Endothelial cell of umbilical vein (primary cell): ENCODE measurements at regions of chr22 and their contacts with region 1.

Region 1: DNA sequence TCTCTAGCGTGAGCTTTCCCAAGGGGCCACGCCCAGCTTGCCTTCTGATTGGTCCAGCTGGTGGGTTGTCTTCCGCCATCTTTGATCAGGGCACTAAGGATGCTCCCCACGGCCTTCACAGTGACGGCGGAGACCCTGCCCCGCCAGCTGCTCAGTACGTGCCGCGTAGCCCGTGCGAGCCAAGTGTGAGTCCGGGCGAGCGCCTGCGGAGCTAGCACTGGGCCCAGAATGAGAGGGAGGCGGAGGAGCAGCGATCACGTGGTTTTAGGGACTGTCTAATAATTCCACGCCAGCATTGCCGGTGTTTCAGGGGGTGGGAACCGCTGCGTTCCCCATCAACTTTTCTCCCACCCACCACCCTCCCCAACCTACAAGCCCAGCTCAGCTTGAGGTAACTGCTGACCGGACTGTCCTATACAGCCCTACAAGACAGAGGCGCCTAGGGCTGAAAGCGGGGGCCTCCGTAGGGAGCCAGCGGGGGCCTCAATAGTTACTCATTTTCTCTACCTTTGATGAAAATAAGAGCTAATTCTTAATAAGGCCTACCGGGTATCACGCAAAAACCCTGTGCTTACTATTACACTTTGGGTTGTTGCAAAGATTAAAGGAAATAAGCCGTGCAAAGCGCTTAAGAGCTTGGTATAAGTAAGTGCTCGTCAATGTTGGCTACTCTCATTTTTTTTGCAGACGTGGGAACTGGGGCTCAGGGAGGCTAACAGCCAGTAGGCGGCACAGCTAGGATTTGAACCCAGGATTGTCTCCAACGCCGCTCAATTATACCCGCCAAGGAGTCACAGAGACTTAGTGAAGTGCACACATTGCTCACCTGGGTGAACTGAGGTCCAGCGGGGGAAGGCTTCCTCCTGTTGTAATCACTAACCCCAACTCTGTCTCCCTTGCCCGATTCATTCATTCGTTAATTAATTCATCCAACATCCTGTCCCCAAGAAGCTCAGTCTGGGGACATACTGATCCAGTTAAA is 1.3 kb upstream of the MTFP1 start:
- DNase-seq: peak; percentile 100
- H3K4me3 ChIP-seq: peak overlapping the region; percentile 2 to 28 (median 19)
- H3K27ac ChIP-seq: peak overlapping the region; percentile 98
- H3K4me1 ChIP-seq: peaks cover 59% of the 10 kb centered on the region
- H3K27me3 ChIP-seq: no peaks in the 10 kb centered on the region
- CTCF ChIP-seq: peak in 1 of 2 donors; percentile 5
- POLR2A ChIP-seq: peak; percentile 72

Region 2: DNA sequence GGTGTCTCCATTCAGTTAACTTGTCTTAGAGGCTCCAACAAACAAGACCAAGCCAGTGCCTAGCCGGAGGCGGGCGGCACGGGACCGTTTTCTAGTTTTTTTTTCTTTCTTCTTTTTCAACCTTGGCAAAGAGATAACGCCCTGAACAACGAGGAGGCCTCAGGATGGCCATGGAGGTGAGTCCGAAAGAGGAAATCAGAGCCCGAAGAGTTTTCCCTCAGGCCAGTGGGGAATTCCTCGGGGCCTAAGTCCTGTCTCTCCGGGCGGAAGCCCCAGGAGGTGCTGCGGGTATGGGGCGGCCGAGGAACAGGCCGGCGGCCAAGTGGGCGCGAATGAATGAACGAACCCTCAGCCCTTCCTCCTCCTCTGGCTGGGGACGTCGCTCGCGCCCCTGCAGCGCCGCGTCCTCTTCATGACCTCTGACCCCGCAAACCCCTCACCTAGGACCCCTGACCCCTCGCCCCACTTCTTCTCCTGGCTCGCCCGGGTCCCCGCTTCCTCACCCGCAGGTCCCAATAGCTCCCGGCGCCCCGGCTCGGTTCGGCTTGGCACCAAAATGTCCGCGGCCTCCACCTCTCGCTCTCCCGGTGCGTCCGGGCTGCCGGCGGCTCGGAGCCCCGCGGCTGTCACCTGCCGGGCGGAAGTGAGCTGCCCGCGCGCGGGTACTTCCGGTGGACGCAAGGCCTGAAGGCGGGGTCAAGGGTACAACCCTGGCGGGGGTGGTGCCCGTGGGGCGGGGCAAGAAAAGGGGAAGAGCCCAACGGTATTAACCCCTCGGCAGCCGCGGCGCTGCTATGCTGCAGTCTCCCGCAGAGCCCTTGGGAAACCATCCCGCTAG is 1036.1 kb before region 1 on chr22 and contains the start of gene AP1B1:
- CTCF ChIA-PET with region 1: no interaction called
- POLR2A ChIA-PET with region 1: no interaction called
- dilution Hi-C with region 1: no loop called
- intact Hi-C with region 1: loop called (anchors 10 kb)
- DNase-seq: peak; percentile 86
- H3K4me3 ChIP-seq: peak within 1 kb of the TSS; percentile 73 to 97 (median 83)
- H3K27ac ChIP-seq: peak within 1 kb of the TSS; percentile 22
- H3K4me1 ChIP-seq: peaks cover 20% of the 10 kb centered on the region
- H3K27me3 ChIP-seq: no peaks in the 10 kb centered on the region
- CTCF ChIP-seq: no peak
- POLR2A ChIP-seq: peak; percentile 44
- total RNA-seq, gene AP1B1: 102 and 107 TPM in 2 replicates

Region 3: DNA sequence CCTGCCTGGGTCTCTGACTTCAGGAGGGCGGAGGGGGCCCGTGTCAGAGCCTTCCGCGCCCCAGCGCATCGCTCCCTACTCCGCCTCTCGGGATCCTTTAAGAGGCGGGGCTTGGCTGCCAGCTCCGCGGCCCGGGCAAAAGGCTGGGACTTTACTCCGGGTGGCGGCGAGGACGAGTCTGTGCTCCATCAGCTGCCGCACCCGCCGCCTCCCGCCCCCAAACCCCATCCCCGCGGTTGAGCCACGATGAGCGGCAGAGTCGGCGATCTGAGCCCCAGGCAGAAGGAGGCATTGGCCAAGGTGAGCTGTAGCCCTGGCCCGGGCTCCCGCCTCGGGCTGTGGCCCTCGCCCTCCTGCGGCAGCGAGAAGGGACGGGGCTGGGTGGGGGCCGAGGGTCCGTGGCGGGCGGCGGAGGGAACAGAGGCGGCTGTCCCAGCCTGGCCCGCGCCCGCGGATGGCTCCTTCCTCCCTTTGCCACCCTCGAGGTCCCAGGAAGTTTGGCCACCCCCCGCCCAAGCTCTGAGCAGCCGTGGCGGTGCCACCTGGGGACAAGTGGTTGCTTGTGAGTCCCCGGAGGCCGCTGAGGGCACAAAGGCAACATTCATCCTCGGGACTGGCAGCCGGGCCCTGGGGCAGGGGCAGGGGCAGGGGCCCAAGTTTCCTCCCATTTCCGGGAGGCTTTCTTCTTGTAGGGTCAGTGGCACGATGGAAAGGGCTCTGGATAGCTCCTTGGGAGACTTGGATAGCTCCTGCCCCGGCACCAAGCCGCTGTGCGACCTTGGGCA is 27.2 kb before region 1 on chr22 and contains the start of gene SEC14L2:
- CTCF ChIA-PET with region 1: interaction called, 58 read pairs
- POLR2A ChIA-PET with region 1: interaction called, 5 read pairs
- dilution Hi-C with region 1: no loop called
- intact Hi-C with region 1: loop called (anchors 1 kb)
- DNase-seq: peak; percentile 52
- H3K4me3 ChIP-seq: peak within 1 kb of the TSS; percentile 61 to 86 (median 79)
- H3K27ac ChIP-seq: no peak within 1 kb of the TSS
- H3K4me1 ChIP-seq: peaks cover 16% of the 10 kb centered on the region
- H3K27me3 ChIP-seq: no peaks in the 10 kb centered on the region
- CTCF ChIP-seq: no peak
- POLR2A ChIP-seq: peak; percentile 66
- total RNA-seq, gene SEC14L2: 22.7 and 28.8 TPM in 2 replicates

Region 4: GRCh38 chr22:30413745-30414524 is 10.3 kb before region 1 on chr22:
- CTCF ChIA-PET with region 1: interaction called, 21 read pairs
- POLR2A ChIA-PET with region 1: no interaction called
- dilution Hi-C with region 1: no loop called
- intact Hi-C with region 1: no loop called
- DNase-seq: no peak
- H3K4me3 ChIP-seq: no peak overlapping the region
- H3K27ac ChIP-seq: no peak overlapping the region
- H3K4me1 ChIP-seq: peaks cover 1% of the 10 kb centered on the region
- H3K27me3 ChIP-seq: no peaks in the 10 kb centered on the region
- CTCF ChIP-seq: no peak
- POLR2A ChIP-seq: no peak

Region 5: GRCh38 chr22:30444632-30445437 is 20.6 kb after region 1 on chr22:
- CTCF ChIA-PET with region 1: interaction called, 22 read pairs
- POLR2A ChIA-PET with region 1: interaction called, 4 read pairs
- dilution Hi-C with region 1: no loop called
- intact Hi-C with region 1: no loop called
- DNase-seq: peak; percentile 76
- H3K4me3 ChIP-seq: no peak overlapping the region
- H3K27ac ChIP-seq: no peak overlapping the region
- H3K4me1 ChIP-seq: no peaks in the 10 kb centered on the region
- H3K27me3 ChIP-seq: no peaks in the 10 kb centered on the region
- CTCF ChIP-seq: peak; percentile 77 to 83
- POLR2A ChIP-seq: peak; percentile 21

Region 6: DNA sequence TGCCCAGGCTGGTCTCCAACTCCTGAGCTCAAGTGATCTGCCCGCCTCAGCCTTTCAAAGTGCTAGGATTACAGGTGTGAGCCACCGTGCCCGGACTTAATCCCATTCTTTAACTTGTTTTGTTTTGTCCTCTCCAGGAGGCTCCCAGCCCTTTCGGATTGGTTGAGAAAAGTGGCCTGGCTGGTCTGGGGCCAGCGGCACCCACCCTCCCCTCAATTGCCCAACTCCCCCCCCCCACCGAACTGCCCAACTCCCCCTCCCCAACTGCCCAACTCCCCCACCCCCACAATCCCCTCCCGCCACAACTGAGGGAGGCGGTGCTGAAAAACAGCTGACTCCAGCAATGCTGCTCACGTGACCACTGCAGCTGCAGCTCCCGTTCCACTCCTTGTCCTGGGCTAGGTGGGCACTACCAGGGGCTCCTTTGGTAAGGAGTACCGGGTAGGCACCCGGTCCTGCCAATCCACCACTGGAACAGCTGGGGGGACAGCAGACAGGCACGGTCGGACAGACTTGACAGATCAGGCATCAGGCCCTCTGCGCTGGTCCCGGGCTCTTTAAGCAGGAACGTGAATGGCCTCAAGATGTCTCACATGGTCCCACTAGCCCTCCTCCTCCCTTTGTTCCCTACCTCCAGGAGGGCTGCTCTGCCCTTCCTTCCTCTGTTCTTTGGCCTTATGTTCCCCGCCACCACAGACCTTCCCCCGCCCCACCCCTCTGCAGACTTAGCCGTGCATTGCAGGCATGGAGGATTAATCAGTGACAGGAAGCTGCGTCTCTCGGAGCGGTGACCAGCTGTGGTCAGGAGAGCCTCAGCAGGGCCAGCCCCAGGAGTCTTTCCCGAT is 182.4 kb after region 1 on chr22 and contains the start of gene TCN2:
- CTCF ChIA-PET with region 1: interaction called, 4 read pairs
- POLR2A ChIA-PET with region 1: no interaction called
- dilution Hi-C with region 1: no loop called
- intact Hi-C with region 1: loop called (anchors 10 kb)
- DNase-seq: peak; percentile 83
- H3K4me3 ChIP-seq: peak within 1 kb of the TSS; percentile 11 to 55 (median 35)
- H3K27ac ChIP-seq: peak within 1 kb of the TSS; percentile 73
- H3K4me1 ChIP-seq: peaks cover 37% of the 10 kb centered on the region
- H3K27me3 ChIP-seq: no peaks in the 10 kb centered on the region
- CTCF ChIP-seq: no peak
- POLR2A ChIP-seq: peak; percentile 84
- total RNA-seq, gene TCN2: 62.3 and 80.6 TPM in 2 replicates